ENCODE measurements at regions of chr5 and their contacts with region 1.

Region 1: DNA sequence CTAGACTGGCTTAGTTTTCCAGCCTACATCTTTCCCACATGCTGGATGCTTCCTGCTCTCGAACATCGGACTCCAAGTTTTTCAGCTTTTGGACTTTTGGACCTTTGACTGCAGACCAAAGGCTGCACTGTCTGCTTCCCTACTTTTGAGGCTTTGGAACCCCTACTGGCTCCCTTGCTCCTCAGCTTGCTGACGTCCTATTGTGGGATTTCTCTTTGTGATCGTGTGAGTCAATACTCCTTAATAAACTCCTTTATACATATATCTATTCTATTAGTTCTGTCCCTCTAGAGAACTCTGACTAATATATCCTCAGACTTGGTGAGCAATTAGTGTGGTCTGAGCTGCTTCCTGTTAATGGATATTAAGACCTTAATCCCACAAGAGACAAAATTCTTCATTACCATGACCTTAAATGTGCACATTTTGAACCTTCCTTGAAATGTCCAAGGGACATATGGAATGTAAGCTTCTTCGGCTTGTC is 752.9 kb downstream of the CDH18 start:
- DNase-seq: no peak
- H3K4me3 Mint-ChIP-seq: no peak overlapping the region
- H3K27ac Mint-ChIP-seq: no peak overlapping the region
- H3K4me1 Mint-ChIP-seq: no peaks in the 10 kb centered on the region
- H3K27me3 Mint-ChIP-seq: no peaks in the 10 kb centered on the region
- CTCF ChIP-seq: no peak

Region 2: GRCh38 chr5:19179571-19179970 is 55.6 kb before region 1 on chr5:
- CTCF ChIA-PET with region 1: no interaction called
- intact Hi-C with region 1: loop called (anchors 1 kb)
- DNase-seq: no peak
- H3K4me3 Mint-ChIP-seq: no peak overlapping the region
- H3K27ac Mint-ChIP-seq: no peak overlapping the region
- H3K4me1 Mint-ChIP-seq: no peaks in the 10 kb centered on the region
- H3K27me3 Mint-ChIP-seq: no peaks in the 10 kb centered on the region
- CTCF ChIP-seq: no peak

Region 3: GRCh38 chr5:19285286-19285685 is 50.1 kb after region 1 on chr5:
- CTCF ChIA-PET with region 1: no interaction called
- intact Hi-C with region 1: no loop called
- DNase-seq: no peak
- H3K4me3 Mint-ChIP-seq: no peak overlapping the region
- H3K27ac Mint-ChIP-seq: no peak overlapping the region
- H3K4me1 Mint-ChIP-seq: no peaks in the 10 kb centered on the region
- H3K27me3 Mint-ChIP-seq: no peaks in the 10 kb centered on the region
- CTCF ChIP-seq: no peak